ENCODE measurements at regions of chr15 and their contacts with region 1.

Region 1: GRCh38 chr15:73964736-73965093 is 27.4 kb downstream of the STOML1 start:
- DNase-seq: peak; percentile 84 to 87
- ATAC-seq: peak; percentile 84 to 96 (median 94)
- H3K4me3 ChIP-seq: no peak overlapping the region
- H3K27ac ChIP-seq: no peak overlapping the region
- H3K4me1 ChIP-seq: no peaks in the 10 kb centered on the region
- H3K27me3 ChIP-seq: no peaks in the 10 kb centered on the region
- CTCF ChIP-seq: peak; percentile 90

Region 2: GRCh38 chr15:73950831-73951561 is 13.7 kb before region 1 on chr15:
- intact Hi-C with region 1: loop called in 1 of 2 experiments (anchors 2 kb)
- DNase-seq: peak; percentile 93 to 95
- ATAC-seq: peak; percentile 94 to 97 (median 96)
- H3K4me3 ChIP-seq: no peak overlapping the region
- H3K27ac ChIP-seq: peak overlapping the region; percentile 80
- H3K4me1 ChIP-seq: peaks cover 15% of the 10 kb centered on the region
- H3K27me3 ChIP-seq: peaks cover 0 to 6% (median 0%) of the 10 kb centered on the region in 3 donors
- CTCF ChIP-seq: peak; percentile 70